Activated CD8-positive, alpha-beta T cell treated with anti-CD3 and anti-CD28 coated beads for 36 hours (primary cell): ENCODE measurements at regions of chr3 and their contacts with region 1.

Region 1: GRCh38 chr3:47617086-47618010 is 38.7 kb upstream of the CSPG5 start:
- DNase-seq: no peak
- ATAC-seq: no peak
- H3K4me3 Mint-ChIP-seq: no peak overlapping the region
- H3K27ac Mint-ChIP-seq: no peak overlapping the region
- H3K4me1 Mint-ChIP-seq: no peaks in the 10 kb centered on the region
- H3K27me3 Mint-ChIP-seq: no peaks in the 10 kb centered on the region
- CTCF ChIP-seq: no peak

Region 2: GRCh38 chr3:47394140-47394870 is 223.0 kb before region 1 on chr3:
- CTCF ChIA-PET with region 1: no interaction called
- POLR2A ChIA-PET with region 1: no interaction called
- intact Hi-C with region 1: no loop called
- DNase-seq: no peak
- ATAC-seq: no peak
- H3K4me3 Mint-ChIP-seq: no peak overlapping the region
- H3K27ac Mint-ChIP-seq: peak overlapping the region; percentile 6
- H3K4me1 Mint-ChIP-seq: peaks cover 27% of the 10 kb centered on the region
- H3K27me3 Mint-ChIP-seq: no peaks in the 10 kb centered on the region
- CTCF ChIP-seq: no peak

Region 3: DNA sequence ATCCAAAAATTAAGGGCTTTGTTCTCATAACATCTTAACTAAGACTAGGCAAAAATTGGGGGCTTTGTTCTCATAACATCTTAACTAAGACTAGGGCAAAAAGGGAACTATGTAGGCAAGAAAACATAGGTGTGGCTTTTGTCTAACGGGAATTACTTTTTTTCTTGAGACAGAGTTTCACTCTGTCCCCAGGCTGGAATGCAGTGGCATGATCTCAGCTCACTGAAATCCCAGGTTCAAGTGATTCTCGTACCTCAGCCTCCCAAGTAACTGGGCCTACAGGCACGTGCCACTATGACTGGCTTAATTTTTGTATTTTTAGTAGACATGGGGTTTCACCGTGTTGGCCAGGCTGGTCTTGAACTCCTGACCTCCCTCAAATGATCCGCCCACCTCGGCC is 11.1 kb after region 1 on chr3:
- CTCF ChIA-PET with region 1: interaction called, 13 read pairs
- POLR2A ChIA-PET with region 1: interaction called, 6 read pairs
- intact Hi-C with region 1: no loop called
- DNase-seq: no peak
- ATAC-seq: no peak
- H3K4me3 Mint-ChIP-seq: no peak overlapping the region
- H3K27ac Mint-ChIP-seq: no peak overlapping the region
- H3K4me1 Mint-ChIP-seq: no peaks in the 10 kb centered on the region
- H3K27me3 Mint-ChIP-seq: no peaks in the 10 kb centered on the region
- CTCF ChIP-seq: no peak

Region 4: GRCh38 chr3:47646362-47646761 is 29.0 kb after region 1 on chr3:
- CTCF ChIA-PET with region 1: no interaction called
- POLR2A ChIA-PET with region 1: no interaction called
- intact Hi-C with region 1: no loop called
- DNase-seq: no peak
- ATAC-seq: no peak
- H3K4me3 Mint-ChIP-seq: no peak overlapping the region
- H3K27ac Mint-ChIP-seq: peak overlapping the region; percentile 12
- H3K4me1 Mint-ChIP-seq: no peaks in the 10 kb centered on the region
- H3K27me3 Mint-ChIP-seq: no peaks in the 10 kb centered on the region
- CTCF ChIP-seq: no peak

Region 5: GRCh38 chr3:47664519-47664918 is 47.2 kb after region 1 on chr3:
- CTCF ChIA-PET with region 1: no interaction called
- POLR2A ChIA-PET with region 1: no interaction called
- intact Hi-C with region 1: no loop called
- DNase-seq: no peak
- ATAC-seq: no peak
- H3K4me3 Mint-ChIP-seq: no peak overlapping the region
- H3K27ac Mint-ChIP-seq: no peak overlapping the region
- H3K4me1 Mint-ChIP-seq: peaks cover 2% of the 10 kb centered on the region
- H3K27me3 Mint-ChIP-seq: no peaks in the 10 kb centered on the region
- CTCF ChIP-seq: no peak

Region 6: DNA sequence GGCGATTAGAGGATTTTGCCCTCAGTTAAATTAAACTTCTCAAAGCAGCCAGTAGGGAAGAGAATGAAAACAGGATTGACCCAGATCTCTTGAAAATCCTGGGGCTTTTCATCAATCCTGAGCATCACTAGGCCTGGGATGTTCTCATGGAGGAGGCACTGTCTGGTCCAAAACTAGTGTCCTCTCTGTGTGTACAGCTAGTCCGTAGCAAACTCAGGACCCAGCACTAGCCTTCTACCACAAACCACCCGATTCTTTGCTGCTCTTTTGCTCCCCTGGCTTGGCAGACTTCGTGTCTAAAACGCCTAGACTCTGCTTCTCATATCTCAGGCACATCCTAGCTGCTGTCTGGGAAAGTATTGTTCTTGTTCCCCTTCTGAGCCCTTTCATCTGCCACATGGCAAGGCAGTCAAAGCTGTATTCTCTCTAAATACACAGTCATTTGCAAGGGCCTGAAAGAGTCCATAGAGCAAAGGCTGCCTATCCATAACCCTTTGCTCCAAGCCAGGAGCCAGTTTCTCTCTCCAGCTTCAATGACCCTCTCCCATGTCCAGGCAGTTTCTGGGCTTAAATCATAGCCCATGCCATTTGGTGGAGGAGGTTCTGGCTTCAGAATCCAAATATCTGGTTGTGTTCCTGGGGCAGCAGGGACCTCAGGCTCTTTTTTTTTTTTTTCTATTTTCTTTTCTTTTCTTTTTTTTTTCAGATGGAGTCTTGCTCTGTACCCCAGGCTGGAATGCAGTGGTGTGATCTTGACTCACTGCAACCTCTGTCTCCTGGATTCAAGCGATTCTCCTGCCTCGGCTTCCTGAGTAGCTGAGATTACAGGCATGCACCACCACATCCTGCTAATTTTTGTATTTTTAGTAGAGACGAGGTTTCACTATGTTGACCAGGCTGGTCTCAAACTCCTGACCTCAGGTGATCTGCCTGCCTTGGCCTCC is 518.5 kb after region 1 on chr3:
- CTCF ChIA-PET with region 1: no interaction called
- POLR2A ChIA-PET with region 1: no interaction called
- intact Hi-C with region 1: no loop called
- DNase-seq: no peak
- ATAC-seq: no peak
- H3K4me3 Mint-ChIP-seq: no peak overlapping the region
- H3K27ac Mint-ChIP-seq: no peak overlapping the region
- H3K4me1 Mint-ChIP-seq: peaks cover 3% of the 10 kb centered on the region
- H3K27me3 Mint-ChIP-seq: peaks cover 2% of the 10 kb centered on the region
- CTCF ChIP-seq: no peak